ENCODE measurements at regions of chr20 and their contacts with region 1.

Region 1: DNA sequence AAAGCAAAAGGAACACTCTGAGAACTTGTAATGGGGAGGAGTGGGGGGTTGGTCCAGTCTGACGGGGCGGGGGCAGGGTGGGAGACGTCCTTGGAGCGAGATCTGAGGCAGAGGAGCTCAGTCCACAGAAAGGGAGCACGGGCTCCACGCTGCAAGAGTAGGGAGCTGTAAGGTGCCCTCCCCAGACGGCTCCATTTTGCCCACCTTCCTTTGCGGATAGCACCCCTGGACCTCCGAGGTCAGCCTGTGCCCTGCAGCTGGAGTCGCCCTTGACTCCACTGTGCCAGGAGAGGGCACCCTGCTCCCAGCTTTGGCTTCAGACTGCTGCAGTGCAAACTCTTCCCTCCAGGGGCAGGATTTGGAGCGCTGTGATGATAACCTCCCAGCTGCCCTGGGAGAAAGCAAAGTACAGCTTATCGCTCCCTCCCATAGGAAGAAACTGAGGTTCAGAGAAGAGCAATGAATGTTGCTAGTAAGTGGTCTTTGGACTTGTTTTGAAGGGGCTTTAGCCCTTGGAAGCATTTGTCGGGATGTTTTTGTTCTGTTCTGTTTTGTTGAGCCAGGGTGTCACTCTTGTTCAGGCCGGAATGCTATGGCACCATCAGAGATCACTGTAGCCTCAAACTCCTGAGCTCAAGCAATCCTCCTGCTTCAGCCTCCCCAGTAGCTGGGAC is 9.5 kb upstream of the AHCY start:
- DNase-seq: peak; percentile 23
- H3K4me3 ChIP-seq: peak overlapping the region in 3 of 4 donors; percentile 15 to 54 (median 15)
- H3K27ac ChIP-seq: no peak overlapping the region
- H3K4me1 ChIP-seq: peaks cover 16 to 40% (median 18%) of the 10 kb centered on the region in 3 donors
- H3K27me3 ChIP-seq: peaks cover 0 to 14% (median 0%) of the 10 kb centered on the region in 4 donors
- CTCF ChIP-seq: peak; percentile 97 to 100 (median 99)
- POLR2A ChIP-seq: no peak

Region 2: DNA sequence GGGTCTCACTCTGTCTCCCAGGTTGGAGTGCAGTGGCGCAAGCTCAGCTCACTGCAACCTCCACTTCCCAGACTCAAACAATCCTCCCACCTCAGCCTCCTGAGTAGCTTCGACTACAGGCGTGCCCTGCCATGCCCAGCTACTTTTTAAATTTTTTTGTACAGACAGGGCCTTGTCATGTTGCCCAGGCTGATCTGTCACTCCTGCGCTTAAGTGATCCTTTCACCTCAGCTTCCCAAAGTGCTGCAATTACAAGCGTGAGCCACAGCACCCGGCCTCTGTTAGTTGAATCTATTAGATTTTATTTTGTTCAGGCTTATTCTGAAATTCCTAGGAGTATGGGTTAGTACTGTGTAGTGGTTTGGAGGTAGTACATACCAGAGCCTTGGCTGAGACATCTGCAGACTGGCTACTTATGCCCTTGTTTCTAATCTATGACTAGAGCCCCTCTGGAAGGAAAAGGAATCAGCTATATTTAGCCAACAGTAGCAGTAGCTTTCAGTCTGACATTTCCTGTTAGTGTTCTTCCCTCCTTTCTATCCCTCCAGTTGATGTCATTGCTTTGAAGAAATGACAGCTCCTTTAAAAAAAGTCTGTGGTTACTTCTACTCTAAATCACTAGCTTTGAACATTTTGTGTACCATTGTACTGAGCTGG is 124.8 kb after region 1 on chr20:
- intact Hi-C with region 1: no loop called
- DNase-seq: no peak
- H3K4me3 ChIP-seq: no peak overlapping the region
- H3K27ac ChIP-seq: no peak overlapping the region
- H3K4me1 ChIP-seq: peaks cover 0 to 6% (median 0%) of the 10 kb centered on the region in 3 donors
- H3K27me3 ChIP-seq: no peaks in the 10 kb centered on the region
- CTCF ChIP-seq: no peak
- POLR2A ChIP-seq: no peak

Region 3: GRCh38 chr20:34479627-34480026 is 166.9 kb after region 1 on chr20:
- intact Hi-C with region 1: loop called (anchors 10 kb)
- DNase-seq: no peak
- H3K4me3 ChIP-seq: no peak overlapping the region
- H3K27ac ChIP-seq: no peak overlapping the region
- H3K4me1 ChIP-seq: peaks cover 0 to 10% (median 0%) of the 10 kb centered on the region in 3 donors
- H3K27me3 ChIP-seq: no peaks in the 10 kb centered on the region
- CTCF ChIP-seq: no peak
- POLR2A ChIP-seq: no peak

Measured in esophagus squamous epithelium (tissue), 5 donors.